Naive thymus-derived CD4-positive, alpha-beta T cell (primary cell): ENCODE measurements at regions of chr9 and their contacts with region 1.

Region 1: DNA sequence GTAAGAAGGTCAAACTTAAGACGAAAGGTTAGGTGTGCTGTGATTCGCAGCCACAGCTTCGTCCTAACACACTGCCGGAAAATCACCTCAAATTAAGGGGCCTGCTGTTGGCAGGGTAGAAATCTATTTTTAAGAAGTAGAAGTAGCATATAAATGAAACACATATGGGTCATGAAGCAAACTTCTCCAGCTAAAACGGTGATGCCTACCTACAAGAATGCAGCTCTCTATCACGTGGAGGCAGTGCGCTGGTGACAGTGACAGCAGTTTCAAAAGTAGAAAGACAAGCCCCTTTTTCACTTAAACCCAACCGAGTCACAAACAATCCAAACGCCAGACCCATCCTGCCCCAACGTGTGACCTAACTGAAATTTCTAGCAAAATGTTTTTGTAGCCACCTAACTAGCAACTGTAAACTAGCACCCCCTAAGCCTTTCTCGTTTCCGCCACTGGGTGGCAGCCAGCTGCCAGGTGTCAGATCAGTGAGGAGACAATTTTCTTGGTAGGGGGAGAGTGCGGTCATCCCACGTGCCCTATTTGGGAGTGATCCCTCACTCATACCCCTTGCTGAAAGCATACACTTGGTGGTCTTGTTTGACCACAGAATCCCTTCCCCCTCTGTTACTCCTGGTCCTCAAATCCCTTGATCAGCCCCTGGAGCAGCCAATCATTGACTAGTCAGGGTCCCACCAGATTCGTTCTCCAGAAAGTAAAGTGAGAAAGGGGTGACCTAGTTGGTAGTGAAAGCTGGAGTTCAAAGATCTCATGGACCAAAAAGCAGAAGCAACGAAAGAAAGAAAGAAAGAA is 71.8 kb upstream of the MAMDC2 start:
- DNase-seq: peak in 7 of 9 donors; percentile 18 to 37 (median 27)
- ATAC-seq: peak; percentile 52
- H3K4me3 ChIP-seq: no peak overlapping the region
- H3K4me3 Mint-ChIP-seq: no peak overlapping the region
- H3K27ac ChIP-seq: no peak overlapping the region
- H3K27ac Mint-ChIP-seq: no peak overlapping the region
- H3K4me1 ChIP-seq: no peaks in the 10 kb centered on the region
- H3K4me1 Mint-ChIP-seq: peaks cover 0 to 4% (median 0%) of the 10 kb centered on the region in 7 donors
- H3K27me3 ChIP-seq: no peaks in the 10 kb centered on the region
- H3K27me3 Mint-ChIP-seq: peaks cover 5 to 19% (median 15%) of the 10 kb centered on the region in 5 donors

Region 2: DNA sequence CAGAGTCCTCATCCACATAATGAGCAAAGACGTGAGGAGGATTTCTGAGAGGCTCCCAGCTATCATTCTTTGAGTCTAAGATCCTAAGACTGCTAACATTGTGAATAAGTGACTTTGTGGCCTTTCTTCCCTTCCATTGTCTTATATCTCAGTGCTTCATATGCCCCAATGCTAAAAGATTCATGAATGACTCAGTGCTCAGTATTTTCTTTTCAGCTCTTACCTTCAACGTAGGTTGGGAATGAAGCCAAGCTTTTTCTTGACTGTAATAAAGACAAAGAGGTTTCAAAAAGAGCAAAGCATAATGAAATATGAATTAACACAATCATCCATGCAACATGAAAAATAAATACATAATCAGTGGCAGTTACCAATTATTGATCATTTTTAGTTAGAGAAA is 500.4 kb before region 1 on chr9:
- CTCF ChIA-PET with region 1: no interaction called
- POLR2A ChIA-PET with region 1: no interaction called
- intact Hi-C with region 1: no loop called
- DNase-seq: no peak
- ATAC-seq: no peak
- H3K4me3 ChIP-seq: no peak overlapping the region
- H3K4me3 Mint-ChIP-seq: no peak overlapping the region
- H3K27ac ChIP-seq: no peak overlapping the region
- H3K27ac Mint-ChIP-seq: no peak overlapping the region
- H3K4me1 ChIP-seq: peaks cover 4 to 16% of the 10 kb centered on the region in 2 donors
- H3K4me1 Mint-ChIP-seq: peaks cover 11 to 25% (median 22%) of the 10 kb centered on the region in 7 donors
- H3K27me3 ChIP-seq: no peaks in the 10 kb centered on the region
- H3K27me3 Mint-ChIP-seq: peaks cover 0 to 17% (median 5%) of the 10 kb centered on the region in 5 donors

Region 3: DNA sequence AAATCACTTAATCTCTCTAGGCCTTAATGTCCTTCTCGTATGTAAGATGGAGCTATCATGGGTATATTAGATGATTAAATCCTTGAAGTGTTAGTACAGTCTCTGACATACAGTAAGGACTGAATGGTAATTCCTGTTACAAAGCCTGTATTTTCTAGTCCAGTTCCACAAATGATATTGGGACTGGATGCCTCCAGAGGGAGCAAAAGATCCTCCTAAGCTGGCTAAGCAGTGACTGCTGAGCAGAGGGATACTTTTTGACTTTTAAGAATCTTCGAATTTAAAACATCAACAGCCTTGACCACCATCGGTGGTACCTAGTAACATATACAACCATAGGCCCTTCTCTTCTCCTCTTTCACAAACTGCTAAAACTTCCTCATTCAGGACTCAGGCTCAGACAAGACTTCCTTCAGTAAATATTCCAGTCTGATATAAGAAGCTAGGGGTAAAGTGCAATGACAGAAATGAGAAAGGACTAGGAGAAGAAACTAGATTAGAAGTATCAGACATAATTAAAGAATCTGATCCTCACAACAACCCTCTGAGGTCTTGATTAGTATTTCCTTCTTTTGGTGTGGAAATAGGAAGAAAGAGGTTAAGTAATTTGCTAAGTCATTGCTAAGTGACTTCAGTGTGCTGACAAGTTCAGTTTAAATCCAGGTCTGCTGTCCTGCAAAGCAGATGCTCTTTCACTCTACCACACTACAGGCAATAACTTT is 226.0 kb before region 1 on chr9:
- CTCF ChIA-PET with region 1: no interaction called
- POLR2A ChIA-PET with region 1: no interaction called
- intact Hi-C with region 1: no loop called
- DNase-seq: no peak
- ATAC-seq: peak; percentile 50
- H3K4me3 ChIP-seq: no peak overlapping the region
- H3K4me3 Mint-ChIP-seq: peak overlapping the region in 1 of 10 donors; percentile 15
- H3K27ac ChIP-seq: no peak overlapping the region
- H3K27ac Mint-ChIP-seq: peak overlapping the region in 6 of 9 donors; percentile 2 to 79 (median 40)
- H3K4me1 ChIP-seq: no peaks in the 10 kb centered on the region
- H3K4me1 Mint-ChIP-seq: peaks cover 28 to 71% (median 55%) of the 10 kb centered on the region in 7 donors
- H3K27me3 ChIP-seq: no peaks in the 10 kb centered on the region
- H3K27me3 Mint-ChIP-seq: no peaks in the 10 kb centered on the region

Region 4: GRCh38 chr9:69798744-69799143 is 173.1 kb before region 1 on chr9:
- CTCF ChIA-PET with region 1: no interaction called
- POLR2A ChIA-PET with region 1: no interaction called
- intact Hi-C with region 1: no loop called
- DNase-seq: no peak
- ATAC-seq: no peak
- H3K4me3 ChIP-seq: no peak overlapping the region
- H3K4me3 Mint-ChIP-seq: no peak overlapping the region
- H3K27ac ChIP-seq: no peak overlapping the region
- H3K27ac Mint-ChIP-seq: no peak overlapping the region
- H3K4me1 ChIP-seq: no peaks in the 10 kb centered on the region
- H3K4me1 Mint-ChIP-seq: peaks cover 0 to 2% (median 0%) of the 10 kb centered on the region in 7 donors
- H3K27me3 ChIP-seq: no peaks in the 10 kb centered on the region
- H3K27me3 Mint-ChIP-seq: peaks cover under 1 to 35% (median 11%) of the 10 kb centered on the region in 5 donors

Region 5: GRCh38 chr9:69949396-69949795 is 22.4 kb before region 1 on chr9:
- CTCF ChIA-PET with region 1: no interaction called
- POLR2A ChIA-PET with region 1: no interaction called
- intact Hi-C with region 1: no loop called
- DNase-seq: no peak
- ATAC-seq: no peak
- H3K4me3 ChIP-seq: no peak overlapping the region
- H3K4me3 Mint-ChIP-seq: no peak overlapping the region
- H3K27ac ChIP-seq: no peak overlapping the region
- H3K27ac Mint-ChIP-seq: no peak overlapping the region
- H3K4me1 ChIP-seq: no peaks in the 10 kb centered on the region
- H3K4me1 Mint-ChIP-seq: peaks cover 0 to 5% (median 0%) of the 10 kb centered on the region in 7 donors
- H3K27me3 ChIP-seq: peaks cover 0 to 4% of the 10 kb centered on the region in 2 donors
- H3K27me3 Mint-ChIP-seq: peaks cover 18 to 42% (median 35%) of the 10 kb centered on the region in 5 donors

Region 6: DNA sequence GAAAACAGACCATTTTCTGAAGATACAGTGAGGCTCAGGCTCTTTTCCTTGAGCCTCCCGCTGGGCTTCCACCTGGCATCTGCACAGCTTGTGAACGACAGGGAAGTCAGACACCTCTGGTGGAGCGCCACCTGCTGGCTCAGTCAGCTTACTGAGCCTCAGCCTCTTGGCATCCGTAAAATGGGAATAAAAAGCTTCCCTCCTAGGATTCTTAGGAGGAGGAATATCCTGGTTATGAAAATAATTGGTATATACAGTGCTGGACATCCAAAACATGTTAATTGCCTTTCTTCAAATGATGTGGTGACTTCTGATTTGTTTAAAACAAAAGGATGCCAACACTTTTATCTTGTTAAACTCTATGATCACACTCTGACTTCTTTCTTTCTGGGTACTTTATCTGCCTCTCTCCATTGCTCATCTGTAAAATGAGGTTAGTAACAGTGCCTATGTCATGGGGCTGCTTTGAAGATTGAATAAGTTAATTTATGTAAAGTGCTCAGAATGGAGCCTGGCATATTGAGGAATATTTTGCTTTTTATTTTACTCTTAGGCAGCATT is 139.3 kb after region 1 on chr9:
- CTCF ChIA-PET with region 1: no interaction called
- POLR2A ChIA-PET with region 1: no interaction called
- intact Hi-C with region 1: loop called (anchors 1 to 2 kb)
- DNase-seq: peak in 7 of 9 donors; percentile 11 to 46 (median 22)
- ATAC-seq: peak; percentile 70
- H3K4me3 ChIP-seq: no peak overlapping the region
- H3K4me3 Mint-ChIP-seq: peak overlapping the region in 1 of 10 donors; percentile 32
- H3K27ac ChIP-seq: no peak overlapping the region
- H3K27ac Mint-ChIP-seq: no peak overlapping the region
- H3K4me1 ChIP-seq: no peaks in the 10 kb centered on the region
- H3K4me1 Mint-ChIP-seq: peaks cover 4 to 10% (median 7%) of the 10 kb centered on the region in 7 donors
- H3K27me3 ChIP-seq: peaks cover 0 to 4% of the 10 kb centered on the region in 2 donors
- H3K27me3 Mint-ChIP-seq: peaks cover 13 to 32% (median 20%) of the 10 kb centered on the region in 5 donors

Region 7: DNA sequence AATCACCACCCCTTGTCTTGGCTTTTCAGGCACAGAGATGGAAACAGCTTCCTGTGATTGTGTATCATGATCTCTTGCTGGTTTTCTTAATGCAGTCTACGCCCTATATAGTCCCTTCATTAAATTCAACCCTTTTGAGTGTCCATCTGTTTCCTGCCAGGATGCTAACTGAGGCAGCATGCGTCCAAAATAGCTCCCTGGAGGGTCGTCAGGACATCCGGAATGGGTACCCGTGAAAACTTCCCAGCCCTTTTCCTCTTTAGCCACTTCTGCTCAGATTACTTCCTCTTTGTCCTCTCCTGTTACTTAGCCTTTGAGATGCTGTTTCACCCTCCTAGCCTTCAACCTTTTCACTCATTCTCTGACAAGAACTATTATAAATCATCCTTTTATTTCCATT is 522.4 kb after region 1 on chr9:
- CTCF ChIA-PET with region 1: no interaction called
- POLR2A ChIA-PET with region 1: no interaction called
- intact Hi-C with region 1: loop called in 1 of 2 experiments (anchors 5 kb)
- DNase-seq: no peak
- ATAC-seq: no peak
- H3K4me3 ChIP-seq: no peak overlapping the region
- H3K4me3 Mint-ChIP-seq: peak overlapping the region in 1 of 10 donors; percentile 5
- H3K27ac ChIP-seq: no peak overlapping the region
- H3K27ac Mint-ChIP-seq: peak overlapping the region in 1 of 9 donors; percentile 62
- H3K4me1 ChIP-seq: peaks cover 0 to 4% of the 10 kb centered on the region in 2 donors
- H3K4me1 Mint-ChIP-seq: peaks cover 13 to 42% (median 31%) of the 10 kb centered on the region in 7 donors
- H3K27me3 ChIP-seq: no peaks in the 10 kb centered on the region
- H3K27me3 Mint-ChIP-seq: peaks cover 0 to 7% (median 0%) of the 10 kb centered on the region in 5 donors

Region 8: GRCh38 chr9:71001780-71002386 is 1030.0 kb after region 1 on chr9:
- CTCF ChIA-PET with region 1: no interaction called
- POLR2A ChIA-PET with region 1: no interaction called
- intact Hi-C with region 1: loop called in 1 of 2 experiments (anchors 5 kb)
- DNase-seq: peak in 1 of 9 donors; percentile 0
- ATAC-seq: no peak
- H3K4me3 ChIP-seq: no peak overlapping the region
- H3K4me3 Mint-ChIP-seq: no peak overlapping the region
- H3K27ac ChIP-seq: no peak overlapping the region
- H3K27ac Mint-ChIP-seq: no peak overlapping the region
- H3K4me1 ChIP-seq: no peaks in the 10 kb centered on the region
- H3K4me1 Mint-ChIP-seq: no peaks in the 10 kb centered on the region
- H3K27me3 ChIP-seq: no peaks in the 10 kb centered on the region
- H3K27me3 Mint-ChIP-seq: peaks cover 0 to 18% (median 4%) of the 10 kb centered on the region in 5 donors